Activated T-helper 2 cell treated with anti-CD3 and anti-CD28 coated beads, Interferon-gamma antibody, Interleukin-2, Interleukin-4, amounts not matched to agents 10 μg/mL and 5 μg/mL and 100 μg/mL, durations not matched to agents 14 hours and 24 hours and 36 hours (primary cell): ENCODE measurements at regions of chr19 and their contacts with region 1.

Region 1: DNA sequence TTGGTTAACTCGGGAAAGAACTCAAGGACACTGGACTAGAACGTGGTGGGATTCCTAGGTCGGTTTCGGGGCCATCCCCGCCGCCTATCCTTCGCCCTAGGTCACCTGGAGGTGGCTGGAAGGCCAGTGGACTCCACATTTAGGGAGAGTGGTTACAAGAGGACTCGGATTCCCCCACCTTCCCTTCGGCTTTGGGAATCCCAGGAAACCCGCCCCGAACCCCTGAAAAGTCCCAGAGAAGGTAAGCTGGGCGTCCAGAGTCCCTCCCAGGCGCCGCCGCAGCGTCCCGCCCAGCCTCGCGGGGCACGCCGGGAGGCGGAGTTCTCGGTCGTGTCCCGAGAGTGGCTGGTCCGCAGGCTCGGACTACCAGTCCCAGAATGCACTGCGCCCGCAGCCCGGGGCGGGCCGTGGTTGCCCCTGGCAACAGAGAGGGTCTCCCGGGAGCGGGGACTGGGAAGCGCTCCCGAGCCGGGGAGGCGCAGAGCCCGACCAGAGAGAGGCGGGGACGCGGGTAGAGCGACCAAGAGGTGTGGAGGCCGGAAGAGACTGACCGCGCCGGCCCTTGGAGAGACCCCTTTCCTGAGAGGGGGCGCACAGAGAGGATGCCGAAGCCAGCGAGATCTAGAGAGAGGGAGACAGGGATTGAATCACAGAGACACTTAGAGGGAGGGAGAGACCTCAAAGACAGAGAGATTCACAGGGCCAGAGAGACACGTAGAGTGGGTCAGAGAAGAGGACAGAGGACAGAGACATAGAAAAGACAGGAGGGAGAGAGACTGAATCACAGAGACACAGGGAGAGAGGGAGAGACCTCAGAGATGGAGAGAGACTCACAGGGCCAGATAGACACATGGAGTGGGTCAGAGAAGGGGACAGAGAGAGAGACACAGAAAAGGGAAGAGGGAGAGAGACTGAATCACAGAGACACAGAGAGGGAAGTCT is 2.6 kb upstream of the PRKCG start:
- DNase-seq: peak; percentile 75
- H3K4me3 Mint-ChIP-seq: no peak overlapping the region
- H3K27ac Mint-ChIP-seq: no peak overlapping the region
- H3K4me1 Mint-ChIP-seq: peaks cover 33% of the 10 kb centered on the region
- H3K27me3 Mint-ChIP-seq: peaks cover 12% of the 10 kb centered on the region

Region 2: GRCh38 chr19:53844849-53845246 is 34.6 kb before region 1 on chr19:
- intact Hi-C with region 1: loop called (anchors 2 kb)
- DNase-seq: no peak
- H3K4me3 Mint-ChIP-seq: no peak overlapping the region
- H3K27ac Mint-ChIP-seq: no peak overlapping the region
- H3K4me1 Mint-ChIP-seq: peaks cover 5% of the 10 kb centered on the region
- H3K27me3 Mint-ChIP-seq: peaks cover 15% of the 10 kb centered on the region

Region 3: GRCh38 chr19:53853707-53854106 is 25.7 kb before region 1 on chr19:
- intact Hi-C with region 1: loop called (anchors 2 kb)
- DNase-seq: no peak
- H3K4me3 Mint-ChIP-seq: no peak overlapping the region
- H3K27ac Mint-ChIP-seq: no peak overlapping the region
- H3K4me1 Mint-ChIP-seq: peaks cover 15% of the 10 kb centered on the region
- H3K27me3 Mint-ChIP-seq: peaks cover 17% of the 10 kb centered on the region